Mucosa of descending colon (tissue), 3 donors: ENCODE measurements at regions of chr2 and their contacts with region 1.

Region 1: GRCh38 chr2:15939854-15940660 is at the start of gene MYCN:
- DNase-seq: peak; percentile 56 to 77 (median 72)
- ATAC-seq: peak; percentile 58
- H3K4me3 ChIP-seq: no peak within 1 kb of the TSS
- H3K4me1 ChIP-seq: peaks cover 34% of the 10 kb centered on the region
- CTCF ChIP-seq: no peak
- total RNA-seq, gene MYCN: 0.52 to 1.1 (median 1.1) TPM

Region 2: GRCh38 chr2:16281451-16282336 is 341.6 kb after region 1 on chr2:
- intact Hi-C with region 1: loop called (anchors 10 kb)
- DNase-seq: peak in 1 of 3 donors; percentile 46
- ATAC-seq: peak; percentile 59
- H3K4me3 ChIP-seq: no peak overlapping the region
- H3K4me1 ChIP-seq: no peaks in the 10 kb centered on the region
- CTCF ChIP-seq: no peak

Region 3: GRCh38 chr2:16507655-16508489 is 567.8 kb after region 1 on chr2:
- intact Hi-C with region 1: loop called in 1 of 2 experiments (anchors 10 kb)
- DNase-seq: peak; percentile 48 to 70 (median 53)
- ATAC-seq: peak; percentile 92
- H3K4me3 ChIP-seq: no peak overlapping the region
- H3K4me1 ChIP-seq: peaks cover 9% of the 10 kb centered on the region
- CTCF ChIP-seq: peak; percentile 44